ENCODE measurements at regions of chr1 and their contacts with region 1.

Region 1: GRCh38 chr1:31701137-31701736 is 2.6 kb downstream of the COL16A1 start:
- DNase-seq: peak; percentile 92
- ATAC-seq: peak; percentile 54 to 56

Region 2: DNA sequence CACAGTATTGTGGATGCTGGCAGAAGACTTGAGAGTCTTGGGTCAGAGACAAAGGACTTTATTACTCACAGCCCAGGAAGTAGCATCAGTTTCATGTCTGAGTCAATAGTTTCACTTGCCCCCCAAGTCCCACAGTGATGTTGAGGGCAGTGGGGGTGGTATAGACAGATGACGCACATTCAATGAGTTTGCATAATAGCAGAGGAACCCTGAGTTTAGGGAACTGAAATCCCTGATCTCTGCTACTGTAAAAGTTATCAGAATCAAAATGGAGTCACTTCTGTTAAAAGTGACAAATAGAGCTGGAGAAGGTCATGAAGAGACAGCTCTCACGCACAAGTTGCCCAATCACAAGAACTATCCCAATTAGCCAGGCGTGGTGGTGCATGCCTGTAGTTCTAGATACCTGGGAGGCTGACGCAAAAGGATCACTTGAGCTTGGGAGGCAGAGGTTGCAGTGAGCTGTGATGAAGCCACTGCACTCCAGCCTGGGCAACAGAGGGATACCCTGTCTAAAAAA is 95.3 kb before region 1 on chr1:
- intact Hi-C with region 1: no loop called
- DNase-seq: no peak
- ATAC-seq: no peak

Region 3: GRCh38 chr1:31669786-31670592 is 31.2 kb before region 1 on chr1:
- intact Hi-C with region 1: loop called in 1 of 2 experiments (anchors 5 kb)
- DNase-seq: peak; percentile 75
- ATAC-seq: peak; percentile 63 to 70

Region 4: GRCh38 chr1:31683997-31684396 is 17.2 kb before region 1 on chr1:
- intact Hi-C with region 1: no loop called
- DNase-seq: no peak
- ATAC-seq: peak in 1 of 2 donors; percentile 12

Measured in left cardiac atrium (tissue), 4 donors.